CD8-positive, alpha-beta T cell (primary cell): ENCODE measurements at regions of chr5 and their contacts with region 1.

Region 1: DNA sequence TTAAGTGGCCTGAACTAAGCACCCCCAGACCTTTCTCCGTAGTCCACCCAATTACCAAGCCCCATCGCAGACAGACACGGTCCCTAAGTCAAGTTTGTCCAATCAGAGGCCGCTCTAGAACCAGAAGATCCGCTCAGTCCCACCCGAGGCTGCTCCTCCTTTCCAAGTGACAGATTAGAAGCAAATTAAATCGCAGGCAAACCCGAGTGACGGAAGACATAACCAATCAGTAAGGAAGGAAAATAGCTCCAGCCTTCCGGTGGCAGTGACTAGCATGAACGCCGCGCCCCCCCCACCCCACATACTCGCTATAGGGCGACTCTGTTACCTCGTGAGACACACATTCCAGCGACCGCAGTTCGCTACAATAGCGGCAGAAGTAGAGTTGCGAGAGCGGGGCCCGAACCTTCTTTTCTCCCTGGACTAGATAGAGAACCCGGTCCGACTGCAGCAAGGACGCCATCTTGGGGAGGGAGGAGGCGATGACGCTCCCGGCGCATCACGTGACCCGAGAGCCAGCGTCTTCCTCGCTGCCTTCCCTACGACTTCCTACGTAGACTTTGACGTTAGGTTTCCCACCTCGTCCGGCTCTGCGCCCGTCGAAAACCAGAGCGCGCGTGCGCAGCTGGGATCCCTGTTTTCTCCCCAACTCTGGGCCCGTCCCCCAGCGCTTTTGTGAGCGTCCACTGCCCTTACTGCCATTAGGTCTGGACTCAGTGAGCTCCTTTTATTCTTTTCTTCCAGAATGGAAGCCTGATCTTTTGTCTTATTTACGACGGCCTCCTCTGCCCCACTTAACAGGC is at the start of gene DCTN4:
- DNase-seq: peak; percentile 83 to 99 (median 93)
- ATAC-seq: peak; percentile 93
- H3K4me3 ChIP-seq: peak within 1 kb of the TSS; percentile 79 to 92
- H3K4me3 Mint-ChIP-seq: no peak within 1 kb of the TSS
- H3K27ac ChIP-seq: peak within 1 kb of the TSS; percentile 89 to 100
- H3K27ac Mint-ChIP-seq: no peak within 1 kb of the TSS
- H3K4me1 ChIP-seq: peaks cover 27% of the 10 kb centered on the region
- H3K4me1 Mint-ChIP-seq: peaks cover 39% of the 10 kb centered on the region
- H3K27me3 ChIP-seq: no peaks in the 10 kb centered on the region
- H3K27me3 Mint-ChIP-seq: peaks cover 2% of the 10 kb centered on the region
- CTCF ChIP-seq: no peak
- total RNA-seq, gene DCTN4: 117 to 121 TPM

Region 2: DNA sequence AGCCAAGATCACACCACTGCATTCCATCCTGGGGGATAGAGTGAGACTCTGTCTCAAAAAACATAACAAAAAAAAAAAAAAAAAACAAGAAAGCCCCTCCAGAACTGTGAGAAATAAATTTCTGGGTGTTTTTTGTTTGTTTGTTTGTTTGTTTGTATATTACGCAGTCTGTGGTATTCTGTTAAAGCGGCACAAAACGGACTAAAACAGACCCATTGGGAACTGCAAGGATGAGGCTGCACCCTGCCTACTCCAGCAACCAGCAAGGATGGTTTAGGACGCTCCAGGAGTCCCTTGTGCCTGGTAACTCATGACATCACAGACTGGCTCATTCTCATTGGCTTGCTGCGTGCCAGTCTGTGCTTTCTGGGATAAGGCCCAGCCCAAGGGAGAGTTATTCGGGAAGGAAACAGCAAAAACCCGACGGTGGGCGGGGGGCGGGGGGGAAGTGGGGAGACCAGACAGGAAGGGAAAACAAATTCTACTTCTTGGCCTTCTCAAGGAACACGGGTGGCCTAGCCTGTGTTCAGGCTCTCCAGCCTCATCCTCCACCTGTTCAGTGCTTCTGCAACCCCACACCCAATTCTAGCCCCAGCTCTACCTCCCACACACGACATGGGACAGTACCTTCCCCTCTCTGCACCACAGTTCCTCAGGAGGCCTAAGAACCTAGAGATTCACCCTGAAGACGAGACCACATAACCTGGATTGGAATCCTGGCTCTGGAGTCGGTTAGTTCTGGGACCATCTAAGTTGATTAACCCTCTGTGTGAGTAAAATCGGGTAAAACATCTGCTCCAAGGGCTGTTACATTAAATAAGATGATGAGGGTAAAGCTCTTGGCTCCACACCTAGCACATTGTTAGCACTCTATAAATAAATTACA is 348.9 kb before region 1 on chr5:
- CTCF ChIA-PET with region 1: no interaction called
- POLR2A ChIA-PET with region 1: no interaction called
- intact Hi-C with region 1: loop called in 1 of 2 experiments (anchors 1 kb)
- DNase-seq: peak in 8 of 9 experiments; percentile 15 to 80 (median 44)
- ATAC-seq: no peak
- H3K4me3 ChIP-seq: peak overlapping the region; percentile 88 to 90
- H3K4me3 Mint-ChIP-seq: peak overlapping the region; percentile 100
- H3K27ac ChIP-seq: peak overlapping the region; percentile 24 to 99
- H3K27ac Mint-ChIP-seq: peak overlapping the region; percentile 100
- H3K4me1 ChIP-seq: peaks cover 39% of the 10 kb centered on the region
- H3K4me1 Mint-ChIP-seq: peaks cover 45% of the 10 kb centered on the region
- H3K27me3 ChIP-seq: no peaks in the 10 kb centered on the region
- H3K27me3 Mint-ChIP-seq: no peaks in the 10 kb centered on the region
- CTCF ChIP-seq: no peak

Region 3: DNA sequence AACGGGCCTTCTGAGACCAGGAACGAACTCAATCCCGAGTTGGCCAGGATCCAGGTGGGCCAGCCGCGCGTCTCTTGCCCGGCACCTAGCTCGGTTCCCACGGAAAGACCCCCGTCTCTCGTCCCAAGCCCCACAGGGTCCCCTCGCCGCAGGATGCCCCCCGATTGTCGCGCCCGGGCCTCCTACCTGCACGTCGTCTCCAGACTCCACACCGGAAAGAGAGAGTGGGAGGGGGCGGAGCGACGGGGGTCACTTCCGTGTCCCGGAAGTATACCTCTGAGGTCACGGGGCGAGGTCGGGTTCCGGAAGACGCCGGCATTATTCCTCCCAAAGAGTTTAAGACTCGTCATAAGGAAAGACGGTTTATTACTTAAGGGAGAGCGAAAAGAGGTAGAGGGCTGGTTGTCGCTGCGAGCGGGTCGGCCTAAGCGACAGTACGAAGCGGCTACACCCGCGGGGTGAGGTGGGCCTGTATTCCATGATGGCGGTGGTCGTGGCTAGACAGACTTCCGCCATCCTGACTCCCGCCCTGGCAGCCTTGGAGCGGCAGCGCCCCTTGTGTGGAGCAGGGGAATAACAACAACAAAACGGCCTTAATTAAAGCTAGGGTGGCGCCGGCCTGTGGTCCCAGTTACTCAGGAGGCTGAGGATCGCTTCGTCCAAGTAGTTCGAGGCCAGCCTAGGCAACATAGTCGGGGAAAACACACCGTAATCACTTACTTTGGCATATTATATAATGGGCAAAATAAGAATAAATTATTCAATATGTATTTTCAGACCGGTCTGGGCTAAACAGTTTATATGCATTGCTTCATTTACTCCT is 309.0 kb before region 1 on chr5 and contains the start of gene RPS14:
- CTCF ChIA-PET with region 1: no interaction called
- POLR2A ChIA-PET with region 1: interaction called, 4 read pairs
- intact Hi-C with region 1: loop called in 1 of 2 experiments (anchors 1 kb)
- DNase-seq: peak; percentile 90 to 97 (median 95)
- ATAC-seq: peak; percentile 92
- H3K4me3 ChIP-seq: peak within 1 kb of the TSS; percentile 77 to 89
- H3K4me3 Mint-ChIP-seq: peak within 1 kb of the TSS; percentile 100
- H3K27ac ChIP-seq: peak within 1 kb of the TSS; percentile 93 to 98
- H3K27ac Mint-ChIP-seq: peak within 1 kb of the TSS; percentile 100
- H3K4me1 ChIP-seq: peaks cover 22% of the 10 kb centered on the region
- H3K4me1 Mint-ChIP-seq: peaks cover 36% of the 10 kb centered on the region
- H3K27me3 ChIP-seq: no peaks in the 10 kb centered on the region
- H3K27me3 Mint-ChIP-seq: no peaks in the 10 kb centered on the region
- CTCF ChIP-seq: peak; percentile 84
- total RNA-seq, gene RPS14: 5,604 to 5,613 TPM

Region 4: DNA sequence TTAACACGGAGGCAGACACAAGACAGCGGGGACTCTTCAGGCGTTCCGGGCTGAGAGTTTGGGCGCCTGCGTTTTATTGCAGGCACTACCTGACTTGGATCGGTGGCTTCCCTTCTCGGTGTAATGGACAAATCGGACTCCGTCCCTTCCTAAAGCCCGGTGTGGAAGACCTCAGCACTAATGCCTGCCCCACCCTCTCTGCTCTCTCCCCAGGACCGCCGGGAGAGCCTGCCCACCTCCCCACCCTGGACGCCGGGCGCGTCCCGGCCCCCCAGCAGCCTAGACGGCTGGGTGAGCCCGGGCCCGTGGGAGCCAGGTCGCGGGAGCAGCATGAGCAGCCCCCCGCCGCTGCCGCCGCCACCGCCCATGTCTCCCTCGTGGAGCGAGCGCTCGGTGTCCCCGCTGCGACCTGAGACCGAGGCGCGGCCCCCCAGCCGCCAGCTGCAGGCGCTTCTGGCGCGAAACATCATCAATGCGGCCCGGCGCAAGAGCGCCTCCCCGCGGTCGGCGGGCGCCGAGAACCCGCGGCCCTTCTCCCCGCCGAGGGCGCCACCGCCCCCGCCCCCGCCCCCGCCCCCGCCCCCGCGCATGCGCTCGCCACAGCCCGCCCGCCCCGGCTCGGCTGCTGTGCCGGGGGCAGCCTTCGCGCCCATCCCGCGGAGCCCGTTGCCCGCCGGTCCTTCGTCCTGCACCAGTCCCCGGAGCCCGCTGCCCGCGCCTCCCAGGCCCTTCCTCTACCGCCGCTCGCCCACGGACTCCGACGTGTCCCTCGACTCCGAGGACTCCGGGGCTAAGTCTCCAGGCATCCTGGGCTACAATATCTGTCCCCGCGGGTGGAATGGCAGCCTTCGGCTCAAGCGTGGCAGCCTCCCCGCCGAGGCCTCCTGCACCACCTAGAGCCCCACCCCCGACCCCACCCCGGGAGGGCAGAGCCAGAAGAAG is 102.3 kb before region 1 on chr5:
- CTCF ChIA-PET with region 1: interaction called, 3 read pairs
- POLR2A ChIA-PET with region 1: no interaction called
- intact Hi-C with region 1: loop called (anchors 1 to 5 kb)
- DNase-seq: peak; percentile 61 to 90 (median 80)
- ATAC-seq: peak; percentile 93
- H3K4me3 ChIP-seq: peak overlapping the region; percentile 51 to 63
- H3K4me3 Mint-ChIP-seq: peak overlapping the region; percentile 78
- H3K27ac ChIP-seq: no peak overlapping the region
- H3K27ac Mint-ChIP-seq: no peak overlapping the region
- H3K4me1 ChIP-seq: peaks cover 6% of the 10 kb centered on the region
- H3K4me1 Mint-ChIP-seq: peaks cover 4% of the 10 kb centered on the region
- H3K27me3 ChIP-seq: no peaks in the 10 kb centered on the region
- H3K27me3 Mint-ChIP-seq: no peaks in the 10 kb centered on the region
- CTCF ChIP-seq: peak; percentile 53

Region 5: DNA sequence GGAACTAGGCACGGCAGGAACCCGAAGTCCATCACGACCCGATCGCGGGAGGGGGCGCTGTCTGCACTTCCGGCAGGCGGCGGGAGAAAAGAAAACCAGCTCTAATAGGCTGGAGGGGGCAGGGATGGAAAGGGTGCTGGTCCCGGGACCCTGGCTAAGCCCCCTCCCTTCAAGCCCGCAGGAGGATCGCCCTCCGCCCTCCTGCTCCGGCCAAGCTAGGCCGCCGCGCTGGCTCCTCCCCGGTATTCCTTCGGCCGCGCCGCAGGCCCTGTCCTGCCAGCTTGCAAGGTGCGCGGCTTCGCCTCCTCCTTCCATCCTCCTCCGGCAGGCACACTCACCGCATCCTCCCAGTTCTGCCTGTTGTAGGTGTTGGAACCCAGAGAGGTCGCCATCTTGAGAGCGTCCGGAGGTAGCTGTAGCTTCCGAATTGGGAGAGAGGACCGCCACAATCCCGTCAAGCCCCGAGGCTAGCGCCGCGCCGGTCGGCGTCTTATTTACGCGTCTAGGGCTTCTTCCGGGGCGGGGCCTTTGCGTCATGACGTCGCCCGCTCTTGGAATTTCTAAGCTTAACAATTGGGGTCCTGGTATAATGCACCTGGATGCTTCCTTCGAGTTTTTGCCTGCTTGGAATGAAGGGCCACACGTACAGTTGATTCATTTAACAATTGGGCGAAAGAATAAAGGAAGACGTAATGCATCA is 58.0 kb before region 1 on chr5 and contains the start of gene RBM22:
- CTCF ChIA-PET with region 1: interaction called, 4 read pairs
- POLR2A ChIA-PET with region 1: interaction called, 22 read pairs
- intact Hi-C with region 1: loop called (anchors 1 kb)
- DNase-seq: peak; percentile 82 to 96 (median 94)
- ATAC-seq: peak; percentile 90
- H3K4me3 ChIP-seq: peak within 1 kb of the TSS; percentile 80 to 81
- H3K4me3 Mint-ChIP-seq: no peak within 1 kb of the TSS
- H3K27ac ChIP-seq: peak within 1 kb of the TSS; percentile 94 to 97
- H3K27ac Mint-ChIP-seq: no peak within 1 kb of the TSS
- H3K4me1 ChIP-seq: peaks cover 19% of the 10 kb centered on the region
- H3K4me1 Mint-ChIP-seq: peaks cover 2% of the 10 kb centered on the region
- H3K27me3 ChIP-seq: no peaks in the 10 kb centered on the region
- H3K27me3 Mint-ChIP-seq: no peaks in the 10 kb centered on the region
- CTCF ChIP-seq: peak; percentile 85
- total RNA-seq, gene RBM22: 119 to 125 TPM

Region 6: GRCh38 chr5:150710165-150710564 is 48.6 kb before region 1 on chr5:
- CTCF ChIA-PET with region 1: interaction called, 3 read pairs
- POLR2A ChIA-PET with region 1: no interaction called
- intact Hi-C with region 1: loop called in 1 of 2 experiments (anchors 5 kb)
- DNase-seq: peak in 2 of 9 experiments; percentile 22 to 33
- ATAC-seq: no peak
- H3K4me3 ChIP-seq: no peak overlapping the region
- H3K4me3 Mint-ChIP-seq: no peak overlapping the region
- H3K27ac ChIP-seq: no peak overlapping the region
- H3K27ac Mint-ChIP-seq: no peak overlapping the region
- H3K4me1 ChIP-seq: no peaks in the 10 kb centered on the region
- H3K4me1 Mint-ChIP-seq: no peaks in the 10 kb centered on the region
- H3K27me3 ChIP-seq: no peaks in the 10 kb centered on the region
- H3K27me3 Mint-ChIP-seq: no peaks in the 10 kb centered on the region
- CTCF ChIP-seq: peak; percentile 39

Region 7: GRCh38 chr5:150846654-150847333 is 88.1 kb after region 1 on chr5:
- CTCF ChIA-PET with region 1: interaction called, 9 read pairs
- POLR2A ChIA-PET with region 1: interaction called, 10 read pairs
- intact Hi-C with region 1: loop called (anchors 1 kb)
- DNase-seq: peak in 8 of 9 experiments; percentile 39 to 93 (median 64)
- ATAC-seq: peak; percentile 90
- H3K4me3 ChIP-seq: peak overlapping the region; percentile 7 to 46
- H3K4me3 Mint-ChIP-seq: peak overlapping the region; percentile 78
- H3K27ac ChIP-seq: peak overlapping the region; percentile 4 to 57
- H3K27ac Mint-ChIP-seq: peak overlapping the region; percentile 87
- H3K4me1 ChIP-seq: no peaks in the 10 kb centered on the region
- H3K4me1 Mint-ChIP-seq: peaks cover 22% of the 10 kb centered on the region
- H3K27me3 ChIP-seq: no peaks in the 10 kb centered on the region
- H3K27me3 Mint-ChIP-seq: no peaks in the 10 kb centered on the region
- CTCF ChIP-seq: peak; percentile 75

Region 8: GRCh38 chr5:151284392-151284967 is 525.7 kb after region 1 on chr5:
- CTCF ChIA-PET with region 1: no interaction called
- POLR2A ChIA-PET with region 1: no interaction called
- intact Hi-C with region 1: no loop called
- DNase-seq: peak in 2 of 9 experiments; percentile 12 to 16
- ATAC-seq: no peak
- H3K4me3 ChIP-seq: no peak overlapping the region
- H3K4me3 Mint-ChIP-seq: no peak overlapping the region
- H3K27ac ChIP-seq: no peak overlapping the region
- H3K27ac Mint-ChIP-seq: no peak overlapping the region
- H3K4me1 ChIP-seq: no peaks in the 10 kb centered on the region
- H3K4me1 Mint-ChIP-seq: no peaks in the 10 kb centered on the region
- H3K27me3 ChIP-seq: no peaks in the 10 kb centered on the region
- H3K27me3 Mint-ChIP-seq: peaks cover 5% of the 10 kb centered on the region
- CTCF ChIP-seq: no peak